RWPE1 (cell line): ENCODE measurements at regions of chr3 and their contacts with region 1.

Region 1: DNA sequence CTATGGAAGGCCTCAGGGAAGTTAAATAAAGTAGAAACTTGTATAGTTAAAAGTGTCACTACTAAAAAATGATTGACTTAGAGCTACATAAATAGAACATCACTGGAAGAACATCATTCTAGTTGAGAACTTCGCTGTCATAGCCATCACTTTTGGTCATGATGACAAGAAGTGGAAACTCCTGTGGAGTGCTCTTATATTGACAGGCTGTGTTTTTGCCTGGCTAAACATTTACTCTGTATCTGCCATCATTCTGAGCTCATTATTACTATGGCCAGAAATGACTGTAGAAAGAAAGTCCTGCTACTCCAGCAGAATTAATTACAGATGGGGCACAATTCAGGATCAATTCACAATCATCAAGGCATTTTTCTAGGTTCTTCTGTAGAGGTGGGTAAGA is 165.1 kb upstream of the GOLIM4 start:
- DNase-seq: no peak
- H3K27ac ChIP-seq: no peak overlapping the region
- CTCF ChIP-seq: no peak

Region 2: GRCh38 chr3:169170456-169170855 is 909.6 kb after region 1 on chr3:
- CTCF ChIA-PET with region 1: no interaction called
- POLR2A ChIA-PET with region 1: interaction called, 10 read pairs
- DNase-seq: no peak
- H3K27ac ChIP-seq: no peak overlapping the region
- CTCF ChIP-seq: no peak